ENCODE measurements at regions of chr9 and their contacts with region 1.

Region 1: DNA sequence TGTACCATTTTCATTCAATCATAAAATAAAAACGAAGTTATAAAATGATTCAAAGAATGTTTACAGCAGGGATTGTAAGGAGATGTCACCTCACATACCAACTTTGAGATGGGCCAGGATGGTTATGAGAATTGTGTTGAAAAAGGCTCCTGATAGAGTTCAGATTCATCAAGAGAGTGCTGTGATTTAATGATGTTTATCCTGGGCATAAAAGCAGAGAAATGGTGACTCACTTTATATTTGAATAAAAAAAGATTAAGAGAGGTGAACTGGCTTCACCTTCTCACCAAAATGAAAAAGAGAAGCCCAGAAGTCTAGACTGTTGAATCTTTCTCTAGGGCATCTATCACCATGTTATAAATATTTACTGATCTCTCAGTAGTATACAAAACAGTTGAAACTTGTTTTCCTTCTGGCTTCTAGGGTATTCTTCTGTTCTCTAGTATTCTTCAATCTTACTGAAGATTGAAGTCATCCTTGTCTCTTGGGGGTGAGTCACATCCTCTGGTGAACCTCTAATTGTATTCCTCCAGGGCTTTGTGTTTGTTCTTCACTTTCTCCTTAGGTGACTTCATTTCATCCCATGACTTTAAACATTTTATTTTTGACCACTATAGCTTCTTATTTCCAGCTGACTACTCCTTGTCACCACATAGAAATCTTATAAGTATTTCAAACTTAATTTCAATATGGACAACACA is 1237.2 kb upstream of the C9orf72 start:
- DNase-seq: no peak

Region 2: DNA sequence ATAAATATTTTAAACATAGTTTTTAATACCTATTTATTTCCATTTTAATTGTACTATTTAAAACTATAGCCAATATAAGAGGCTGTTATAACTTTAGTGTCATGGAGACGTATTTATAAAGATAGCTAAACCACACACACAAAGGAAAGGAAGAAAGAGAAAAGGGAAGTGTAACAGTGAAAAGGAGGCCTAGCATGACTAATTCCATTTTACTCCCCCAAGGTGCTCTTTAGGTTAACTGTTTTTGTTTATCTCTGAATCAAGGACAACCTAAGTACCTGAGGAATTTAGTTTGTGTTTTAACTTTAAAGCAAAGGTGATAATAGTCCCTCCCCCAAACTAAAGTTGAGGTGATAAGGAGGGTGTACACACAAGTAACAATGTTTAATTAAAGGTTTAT is 48.4 kb before region 1 on chr9:
- intact Hi-C with region 1: loop called (anchors 5 kb)
- DNase-seq: no peak

Region 3: GRCh38 chr9:28866951-28867350 is 56.4 kb after region 1 on chr9:
- intact Hi-C with region 1: no loop called
- DNase-seq: no peak